Lower leg skin (tissue), 4 donors: ENCODE measurements at regions of chr18 and their contacts with region 1.

Region 1: DNA sequence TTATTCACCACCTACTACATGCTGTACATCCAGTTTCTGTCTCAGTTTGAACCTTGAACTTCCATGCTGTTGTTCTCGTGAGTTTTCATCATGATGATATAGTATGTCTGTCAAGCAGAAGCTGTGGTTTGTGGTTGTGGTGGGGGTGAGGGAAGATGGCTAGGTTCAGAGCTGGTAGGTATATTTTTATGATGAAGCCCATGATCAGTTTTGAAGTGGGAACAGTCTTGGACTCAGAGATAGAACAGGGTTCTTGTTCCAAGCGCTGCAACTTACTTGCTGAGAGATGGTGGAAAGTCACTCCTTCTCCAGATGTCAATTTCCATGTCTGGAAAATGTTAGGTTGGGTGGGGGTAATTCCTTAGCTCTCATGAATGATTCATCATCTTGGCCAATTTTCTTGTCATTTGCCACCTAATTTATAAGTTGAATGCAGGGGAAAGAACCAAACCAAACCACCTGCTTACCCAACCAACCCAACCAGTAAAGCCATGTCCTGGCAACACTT is 21.6 kb downstream of the PMAIP1 start:
- DNase-seq: no peak
- H3K4me3 ChIP-seq: no peak overlapping the region
- CTCF ChIP-seq: no peak
- POLR2A ChIP-seq: no peak

Region 2: GRCh38 chr18:59851784-59852399 is 69.5 kb before region 1 on chr18:
- intact Hi-C with region 1: no loop called
- DNase-seq: no peak
- H3K4me3 ChIP-seq: no peak overlapping the region
- CTCF ChIP-seq: no peak
- POLR2A ChIP-seq: no peak

Region 3: DNA sequence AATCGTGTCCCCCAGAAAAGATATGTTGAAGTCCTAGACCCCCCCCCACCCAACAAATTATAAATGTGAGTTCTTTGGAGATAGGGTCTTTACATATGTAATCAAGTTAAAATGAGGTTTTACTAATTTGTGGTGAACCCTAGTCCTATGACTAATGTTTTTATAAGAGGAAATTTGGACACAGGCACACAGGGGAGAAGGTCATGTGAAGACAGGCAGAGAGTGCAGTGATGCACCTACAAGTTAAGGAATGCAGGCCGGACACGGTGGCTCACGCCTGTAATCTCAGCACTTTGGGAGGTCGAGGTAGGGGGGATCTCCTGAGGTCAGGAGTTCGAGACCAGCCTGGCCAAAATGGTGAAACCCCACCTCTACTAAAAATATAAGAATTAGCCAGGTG is 27.5 kb before region 1 on chr18:
- intact Hi-C with region 1: loop called (anchors 2 kb)
- DNase-seq: no peak
- H3K4me3 ChIP-seq: no peak overlapping the region
- CTCF ChIP-seq: no peak
- POLR2A ChIP-seq: no peak

Region 4: DNA sequence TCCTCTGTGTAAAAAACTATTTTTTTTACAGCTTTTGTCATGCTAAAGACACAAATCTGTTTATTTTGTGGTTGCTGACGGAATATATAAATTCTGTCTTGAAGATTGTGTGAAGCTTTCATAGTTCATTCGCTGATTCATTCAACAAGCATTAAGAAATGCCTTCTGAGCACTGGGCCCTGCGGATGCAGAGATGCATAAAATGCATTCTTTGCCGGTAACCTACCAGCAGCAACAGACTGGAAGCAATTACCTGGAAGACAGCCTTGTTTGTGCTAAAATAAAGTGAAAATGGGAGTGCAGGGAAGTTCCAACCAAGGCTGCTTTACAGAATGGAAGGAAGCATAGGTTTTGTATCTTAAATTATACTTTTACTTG is 98.0 kb after region 1 on chr18:
- intact Hi-C with region 1: no loop called
- DNase-seq: no peak
- H3K4me3 ChIP-seq: no peak overlapping the region
- CTCF ChIP-seq: no peak
- POLR2A ChIP-seq: no peak

Region 5: GRCh38 chr18:60277855-60278480 is 356.5 kb after region 1 on chr18:
- intact Hi-C with region 1: no loop called
- DNase-seq: no peak
- H3K4me3 ChIP-seq: no peak overlapping the region
- CTCF ChIP-seq: no peak
- POLR2A ChIP-seq: no peak